BJ (cell line): ENCODE measurements at regions of chr11 and their contacts with region 1.

Region 1: GRCh38 chr11:44927174-44927661 is 23.5 kb downstream of the TP53I11 start:
- DNase-seq: no peak
- H3K4me3 ChIP-seq: no peak overlapping the region
- H3K27me3 ChIP-seq: no peaks in the 10 kb centered on the region; the same call in 1 of the 2 replicates
- CTCF ChIP-seq: peak; percentile 92

Region 2: DNA sequence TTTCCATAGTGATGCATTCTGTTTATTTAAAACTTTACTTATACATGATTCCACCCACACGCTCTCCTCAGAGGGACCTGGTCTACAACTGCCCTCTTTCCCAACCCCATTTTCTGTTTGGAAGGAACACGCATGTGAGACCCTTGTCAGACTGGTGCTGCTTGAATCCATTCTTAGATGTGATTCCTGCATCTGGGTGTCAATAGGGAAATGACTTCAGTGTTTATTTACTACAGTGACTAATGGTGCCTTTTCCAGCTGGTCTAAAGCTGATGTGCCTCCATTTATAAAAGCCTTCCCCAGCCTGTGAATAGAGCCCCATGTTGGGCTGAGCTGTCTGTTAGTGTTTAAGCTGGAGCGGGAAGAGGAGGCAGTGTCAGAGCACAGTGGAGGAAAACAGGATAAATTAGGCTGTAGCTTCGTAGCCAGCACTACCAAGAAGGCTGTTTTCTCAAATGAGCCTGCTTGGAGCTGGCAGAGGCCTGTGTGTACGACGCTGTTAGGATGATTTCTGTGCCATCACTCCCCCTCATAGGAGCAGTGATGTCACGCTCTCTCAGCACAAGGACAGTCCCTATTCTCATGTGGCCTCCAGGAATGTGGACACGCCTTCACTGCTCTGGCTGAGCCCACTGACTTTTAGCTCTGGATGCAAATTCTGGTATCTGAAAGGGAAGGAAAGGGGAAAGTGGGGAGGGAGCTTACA is 1003.7 kb before region 1 on chr11:
- CTCF ChIA-PET with region 1: no interaction called
- POLR2A ChIA-PET with region 1: no interaction called
- DNase-seq: no peak
- H3K4me3 ChIP-seq: no peak overlapping the region
- H3K27me3 ChIP-seq: no peaks in the 10 kb centered on the region
- CTCF ChIP-seq: no peak

Region 3: GRCh38 chr11:44627911-44628729 is 299.1 kb before region 1 on chr11:
- CTCF ChIA-PET with region 1: interaction called, 26 read pairs
- POLR2A ChIA-PET with region 1: no interaction called
- DNase-seq: no peak
- H3K4me3 ChIP-seq: no peak overlapping the region
- H3K27me3 ChIP-seq: peaks cover 17% of the 10 kb centered on the region
- CTCF ChIP-seq: no peak

Region 4: DNA sequence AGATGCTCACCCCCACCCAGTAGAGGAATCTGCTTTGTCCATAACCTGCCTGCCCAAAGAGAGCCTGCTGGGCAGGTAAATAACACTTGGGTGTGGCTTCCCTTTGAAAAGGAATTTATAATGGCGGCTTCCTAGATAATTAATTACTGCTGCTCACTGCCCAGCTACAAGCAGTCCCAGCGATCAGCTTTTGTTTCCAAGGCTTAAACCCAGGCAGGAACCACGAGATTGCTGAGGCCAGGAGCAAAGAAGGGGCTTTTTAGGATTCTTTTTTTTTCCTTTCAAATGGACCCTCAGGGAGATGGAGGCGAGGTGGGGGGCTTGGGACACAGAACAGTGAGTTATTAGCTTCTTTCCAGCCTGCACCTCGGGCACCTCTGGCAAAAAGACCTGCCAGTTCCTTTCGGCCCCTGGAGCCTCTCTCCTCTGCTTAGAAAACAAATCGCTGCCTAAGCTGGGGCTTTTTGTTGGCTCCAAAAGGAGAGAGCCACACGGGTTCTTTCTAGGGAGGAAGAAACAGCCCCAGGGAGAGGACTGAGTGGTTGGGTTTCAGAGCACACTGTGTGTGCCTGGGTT is 93.3 kb before region 1 on chr11:
- CTCF ChIA-PET with region 1: no interaction called
- POLR2A ChIA-PET with region 1: no interaction called
- DNase-seq: no peak
- H3K4me3 ChIP-seq: no peak overlapping the region
- H3K27me3 ChIP-seq: peaks cover 5% of the 10 kb centered on the region
- CTCF ChIP-seq: no peak

Region 5: GRCh38 chr11:44916801-44917385 is 10.3 kb before region 1 on chr11:
- CTCF ChIA-PET with region 1: interaction called, 25 read pairs
- POLR2A ChIA-PET with region 1: no interaction called
- DNase-seq: no peak
- H3K4me3 ChIP-seq: no peak overlapping the region
- H3K27me3 ChIP-seq: peaks cover 4% of the 10 kb centered on the region
- CTCF ChIP-seq: no peak

Region 6: GRCh38 chr11:44950625-44951476 is 23.6 kb after region 1 on chr11 and contains the start of gene TP53I11:
- CTCF ChIA-PET with region 1: interaction called, 22 read pairs
- POLR2A ChIA-PET with region 1: no interaction called
- DNase-seq: peak; percentile 18
- H3K4me3 ChIP-seq: peak within 1 kb of the TSS; percentile 92
- H3K27me3 ChIP-seq: no peaks in the 10 kb centered on the region
- CTCF ChIP-seq: peak; percentile 37
- polyA plus RNA-seq, gene TP53I11: 22.2 and 29.6 TPM in 2 replicates